Esophagus muscularis mucosa (tissue), 4 donors: ENCODE measurements at regions of chr4 and their contacts with region 1.

Region 1: GRCh38 chr4:34826660-34827059 is 1417.7 kb downstream of the ARAP2 start:
- DNase-seq: no peak
- H3K4me3 ChIP-seq: no peak overlapping the region
- H3K27ac ChIP-seq: no peak overlapping the region
- H3K4me1 ChIP-seq: no peaks in the 10 kb centered on the region
- H3K27me3 ChIP-seq: no peaks in the 10 kb centered on the region
- CTCF ChIP-seq: no peak
- EP300 ChIP-seq: no peak
- POLR2A ChIP-seq: no peak

Region 2: DNA sequence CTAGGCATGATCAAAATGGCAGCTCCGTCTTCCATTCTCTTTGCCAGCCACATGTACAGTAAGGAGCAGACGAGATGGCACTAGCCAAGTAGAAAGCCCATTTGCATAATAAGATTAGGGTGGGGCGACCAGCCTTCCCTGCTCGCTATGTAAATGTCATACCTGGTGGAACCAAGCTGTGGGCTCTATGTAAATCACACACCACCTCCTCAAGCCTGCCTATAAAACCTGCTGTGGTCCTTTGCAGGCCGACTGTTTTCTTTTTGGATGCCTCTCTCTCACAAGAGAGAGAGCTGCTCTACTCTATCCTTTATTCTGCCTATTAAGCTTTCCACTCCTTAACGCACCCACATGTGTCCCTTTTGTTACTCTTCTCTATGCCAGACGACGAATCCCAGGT is 55.0 kb before region 1 on chr4:
- intact Hi-C with region 1: loop called (anchors 5 kb)
- DNase-seq: no peak
- H3K4me3 ChIP-seq: no peak overlapping the region
- H3K27ac ChIP-seq: no peak overlapping the region
- H3K4me1 ChIP-seq: no peaks in the 10 kb centered on the region
- H3K27me3 ChIP-seq: no peaks in the 10 kb centered on the region
- CTCF ChIP-seq: no peak
- EP300 ChIP-seq: no peak
- POLR2A ChIP-seq: no peak

Region 3: DNA sequence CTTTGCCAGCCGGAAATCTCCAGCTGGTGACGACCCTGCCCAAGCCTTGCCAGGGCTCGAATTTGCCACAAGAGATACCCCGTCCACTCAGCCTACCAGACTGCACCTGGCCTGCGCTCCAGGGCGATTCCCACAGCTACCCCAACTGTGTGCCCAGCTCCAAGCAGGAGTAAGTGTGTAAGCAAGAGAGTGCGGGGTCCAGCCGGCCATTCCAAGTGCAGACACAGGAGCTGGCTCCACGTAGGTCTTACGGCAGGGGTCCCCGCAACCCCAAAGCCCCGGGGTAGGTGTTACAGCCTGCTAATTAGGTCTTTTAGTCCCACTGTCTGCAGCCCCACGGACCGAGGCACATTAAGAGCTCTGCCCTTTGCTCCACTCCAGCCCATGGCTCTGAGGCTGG is 112.4 kb after region 1 on chr4:
- intact Hi-C with region 1: no loop called
- DNase-seq: no peak
- H3K4me3 ChIP-seq: no peak overlapping the region
- H3K27ac ChIP-seq: no peak overlapping the region
- H3K4me1 ChIP-seq: no peaks in the 10 kb centered on the region
- H3K27me3 ChIP-seq: no peaks in the 10 kb centered on the region
- CTCF ChIP-seq: no peak
- EP300 ChIP-seq: no peak
- POLR2A ChIP-seq: no peak